Activated CD8-positive, alpha-beta T cell treated with anti-CD3 and anti-CD28 coated beads, Interleukin-2, amount 10 ng/mL, durations not matched to agents 7 days and 5 days (primary cell): ENCODE measurements at regions of chr14 and their contacts with region 1.

Region 1: DNA sequence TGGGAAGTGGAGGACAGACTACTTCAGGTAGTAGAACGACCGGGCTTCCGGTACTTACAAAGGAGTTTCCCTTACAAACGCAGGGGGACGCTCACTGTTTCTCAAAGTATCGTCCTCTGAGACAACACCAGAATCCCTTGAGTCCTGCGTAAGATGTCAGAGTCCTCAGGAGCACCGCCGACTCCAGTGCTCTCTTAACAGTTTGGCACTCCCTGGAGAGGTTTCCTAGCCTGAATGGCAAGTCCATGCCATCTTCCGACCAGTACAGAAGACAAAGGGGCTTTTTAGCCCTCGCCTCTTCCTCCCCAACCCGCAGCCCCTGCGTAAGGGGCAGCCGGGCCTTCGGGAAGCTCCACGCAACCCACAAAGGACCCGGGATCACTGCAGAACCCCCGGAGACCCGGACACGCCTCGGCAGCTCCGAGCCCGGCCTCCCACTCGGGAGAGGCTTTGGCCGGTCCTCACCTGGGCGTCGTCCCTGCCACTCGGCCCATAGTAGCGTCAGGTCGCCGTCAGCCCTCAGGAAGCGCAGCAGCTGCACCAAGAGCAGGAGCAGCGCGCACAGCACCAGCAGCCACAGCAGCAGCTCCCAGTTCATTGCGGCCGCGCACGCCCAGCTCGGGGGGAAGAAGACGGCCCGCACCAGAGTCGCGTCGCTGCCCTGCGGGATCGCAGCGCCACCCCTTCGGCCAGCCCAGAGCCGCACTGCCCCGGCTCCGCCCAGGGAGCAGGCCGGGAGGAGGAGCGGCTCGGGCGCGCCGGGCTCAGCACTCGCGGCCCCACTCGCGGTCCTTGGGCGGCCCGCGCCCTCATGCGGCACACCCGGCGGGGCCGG is at the start of gene DHRS7:
- DNase-seq: peak; percentile 76
- ATAC-seq: peak; percentile 92
- H3K4me3 Mint-ChIP-seq: peak within 1 kb of the TSS; percentile 98
- H3K27ac Mint-ChIP-seq: peak within 1 kb of the TSS; percentile 96
- H3K4me1 Mint-ChIP-seq: peaks cover 42% of the 10 kb centered on the region
- H3K27me3 Mint-ChIP-seq: peaks cover 6% of the 10 kb centered on the region
- total RNA-seq, gene DHRS7: 45.7 to 54.4 TPM

Region 2: DNA sequence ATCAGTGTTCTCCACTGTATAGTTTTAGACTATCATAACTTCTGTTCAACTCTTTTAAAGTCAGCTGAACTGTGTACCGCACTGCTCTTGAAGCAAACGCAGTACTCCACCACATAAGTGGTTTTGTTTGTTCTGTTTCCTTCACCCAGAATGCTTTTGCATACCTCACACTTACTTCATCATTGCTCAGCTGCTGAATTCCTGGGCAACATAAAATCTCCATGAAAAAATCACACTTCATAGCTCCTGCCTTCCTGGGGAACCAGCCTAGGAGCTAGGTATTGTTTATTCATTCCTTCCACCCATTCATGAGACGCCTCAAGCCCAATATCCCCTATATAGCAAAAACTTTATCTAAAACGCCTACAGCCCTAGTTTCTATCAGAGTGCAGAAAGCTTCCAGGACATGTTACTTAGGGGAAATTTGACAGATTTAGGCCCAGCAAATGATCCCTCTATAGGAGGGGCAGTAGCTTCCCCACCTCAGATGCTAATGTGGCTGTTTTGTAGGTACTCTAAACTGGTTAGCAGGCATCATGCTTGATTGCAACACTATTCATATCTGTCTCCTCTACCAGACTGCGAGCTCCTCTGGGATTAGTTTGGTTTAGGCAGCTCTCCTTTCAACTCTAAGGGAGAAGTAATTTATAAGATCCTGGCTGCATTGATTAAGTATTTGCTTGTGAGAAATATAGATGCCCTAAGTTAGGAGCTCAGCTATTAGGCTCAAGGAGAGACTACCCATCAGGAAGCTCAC is 200.5 kb before region 1 on chr14:
- CTCF ChIA-PET with region 1: interaction called, 20 read pairs
- POLR2A ChIA-PET with region 1: interaction called, 9 read pairs
- DNase-seq: peak; percentile 23
- ATAC-seq: peak; percentile 34
- H3K4me3 Mint-ChIP-seq: peak overlapping the region; percentile 76
- H3K27ac Mint-ChIP-seq: peak overlapping the region; percentile 84
- H3K4me1 Mint-ChIP-seq: peaks cover 20% of the 10 kb centered on the region
- H3K27me3 Mint-ChIP-seq: peaks cover 9% of the 10 kb centered on the region

Region 3: GRCh38 chr14:60064491-60065072 is 100.3 kb before region 1 on chr14:
- CTCF ChIA-PET with region 1: interaction called, 12 read pairs
- POLR2A ChIA-PET with region 1: interaction called, 3 read pairs
- DNase-seq: no peak
- ATAC-seq: peak; percentile 55
- H3K4me3 Mint-ChIP-seq: no peak overlapping the region
- H3K27ac Mint-ChIP-seq: no peak overlapping the region
- H3K4me1 Mint-ChIP-seq: no peaks in the 10 kb centered on the region
- H3K27me3 Mint-ChIP-seq: peaks cover 7% of the 10 kb centered on the region

Region 4: DNA sequence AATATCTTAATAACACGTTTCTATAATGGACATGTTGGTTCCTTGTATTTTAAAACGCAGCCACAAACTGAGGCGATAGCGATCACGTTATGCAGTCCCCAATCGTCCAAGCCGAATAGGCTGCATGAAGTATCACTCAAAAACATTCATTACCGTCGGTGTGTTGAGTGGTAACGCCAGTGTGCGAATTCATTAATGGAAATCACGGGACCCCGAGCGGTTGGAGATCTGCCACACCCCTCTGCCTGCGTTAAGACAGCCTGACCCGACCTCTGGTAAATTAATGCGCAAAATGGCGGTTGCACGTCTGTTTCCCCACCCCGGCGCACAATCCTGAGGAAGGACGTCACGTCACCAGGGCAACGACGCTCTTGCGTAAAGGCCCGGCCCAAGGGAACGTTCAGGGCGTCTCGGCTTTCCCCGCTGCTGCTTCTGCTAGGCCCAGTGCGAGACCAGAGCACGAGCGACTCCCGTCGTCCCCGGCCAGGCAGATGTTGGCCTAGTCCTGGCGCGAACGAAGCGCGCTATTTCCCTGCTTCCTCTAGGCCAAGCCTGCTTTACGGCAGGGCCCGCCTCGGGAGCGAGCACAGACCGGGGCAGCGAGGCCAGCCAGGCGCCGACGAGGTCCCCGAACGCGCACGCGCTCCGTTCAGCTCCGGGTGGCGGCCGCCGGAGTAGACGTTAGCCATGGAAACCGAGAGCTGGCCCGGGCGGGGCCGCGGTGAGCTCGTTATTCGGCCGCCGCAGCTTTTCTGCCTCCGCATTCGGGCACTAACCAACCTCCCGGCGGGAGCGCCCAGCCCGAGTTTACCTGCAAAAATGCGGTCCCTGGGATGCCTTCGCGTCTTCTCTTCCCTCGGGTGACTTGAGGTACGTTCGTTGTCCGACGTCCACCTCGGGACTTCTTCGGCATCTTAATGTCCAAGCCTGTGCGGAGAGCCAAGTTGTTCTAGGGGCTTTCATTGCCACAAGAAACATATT is 73.1 kb before region 1 on chr14 and contains the start of gene PCNX4:
- CTCF ChIA-PET with region 1: interaction called, 5 read pairs
- POLR2A ChIA-PET with region 1: interaction called, 16 read pairs
- DNase-seq: peak; percentile 96
- ATAC-seq: peak; percentile 94
- H3K4me3 Mint-ChIP-seq: peak within 1 kb of the TSS; percentile 94
- H3K27ac Mint-ChIP-seq: peak within 1 kb of the TSS; percentile 96
- H3K4me1 Mint-ChIP-seq: peaks cover 35% of the 10 kb centered on the region
- H3K27me3 Mint-ChIP-seq: no peaks in the 10 kb centered on the region
- total RNA-seq, gene PCNX4: 35.4 to 36.6 TPM

Region 5: DNA sequence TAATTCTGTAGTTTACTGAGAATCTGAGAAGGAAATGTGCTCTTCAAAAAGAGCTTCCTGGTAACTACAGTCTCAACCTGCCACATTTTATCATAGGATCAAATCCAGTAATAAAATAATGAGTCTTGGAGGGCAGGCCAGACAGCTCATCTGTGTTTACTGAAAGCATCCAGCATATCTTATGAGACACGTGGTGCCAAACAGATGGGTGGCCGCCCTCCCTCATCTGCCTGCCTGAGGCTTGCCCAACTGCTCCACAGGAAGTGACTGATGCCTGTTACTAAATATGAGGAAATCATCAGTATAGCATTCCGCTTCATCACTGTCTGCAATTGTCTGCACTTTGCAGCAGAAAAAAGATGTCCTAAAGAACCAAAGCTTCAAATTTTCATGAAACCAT is 13.2 kb before region 1 on chr14:
- CTCF ChIA-PET with region 1: interaction called, 13 read pairs
- POLR2A ChIA-PET with region 1: interaction called, 4 read pairs
- DNase-seq: peak; percentile 80
- ATAC-seq: peak; percentile 89
- H3K4me3 Mint-ChIP-seq: no peak overlapping the region
- H3K27ac Mint-ChIP-seq: peak overlapping the region; percentile 68
- H3K4me1 Mint-ChIP-seq: peaks cover 43% of the 10 kb centered on the region
- H3K27me3 Mint-ChIP-seq: no peaks in the 10 kb centered on the region

Region 6: GRCh38 chr14:60212503-60213371 is 47.8 kb after region 1 on chr14:
- CTCF ChIA-PET with region 1: no interaction called
- POLR2A ChIA-PET with region 1: no interaction called
- DNase-seq: no peak
- ATAC-seq: no peak
- H3K4me3 Mint-ChIP-seq: no peak overlapping the region
- H3K27ac Mint-ChIP-seq: no peak overlapping the region
- H3K4me1 Mint-ChIP-seq: no peaks in the 10 kb centered on the region
- H3K27me3 Mint-ChIP-seq: peaks cover 16% of the 10 kb centered on the region

Region 7: GRCh38 chr14:60248697-60249318 is 83.9 kb after region 1 on chr14 and contains the start of gene PPM1A:
- CTCF ChIA-PET with region 1: interaction called, 3 read pairs
- POLR2A ChIA-PET with region 1: interaction called, 16 read pairs
- DNase-seq: peak; percentile 95
- ATAC-seq: peak; percentile 74
- H3K4me3 Mint-ChIP-seq: peak within 1 kb of the TSS; percentile 93
- H3K27ac Mint-ChIP-seq: peak within 1 kb of the TSS; percentile 100
- H3K4me1 Mint-ChIP-seq: peaks cover 56% of the 10 kb centered on the region
- H3K27me3 Mint-ChIP-seq: no peaks in the 10 kb centered on the region
- total RNA-seq, gene PPM1A: 45.2 to 50.1 TPM